Mammary epithelial cell (primary cell): ENCODE measurements at regions of chr3 and their contacts with region 1.

Region 1: GRCh38 chr3:12622335-12622734 is 41.6 kb downstream of the RAF1 start:
- DNase-seq: no peak
- H3K4me3 ChIP-seq: no peak overlapping the region
- H3K27ac ChIP-seq: no peak overlapping the region
- H3K4me1 ChIP-seq: no peaks in the 10 kb centered on the region
- H3K27me3 ChIP-seq: no peaks in the 10 kb centered on the region
- CTCF ChIP-seq: no peak

Region 2: DNA sequence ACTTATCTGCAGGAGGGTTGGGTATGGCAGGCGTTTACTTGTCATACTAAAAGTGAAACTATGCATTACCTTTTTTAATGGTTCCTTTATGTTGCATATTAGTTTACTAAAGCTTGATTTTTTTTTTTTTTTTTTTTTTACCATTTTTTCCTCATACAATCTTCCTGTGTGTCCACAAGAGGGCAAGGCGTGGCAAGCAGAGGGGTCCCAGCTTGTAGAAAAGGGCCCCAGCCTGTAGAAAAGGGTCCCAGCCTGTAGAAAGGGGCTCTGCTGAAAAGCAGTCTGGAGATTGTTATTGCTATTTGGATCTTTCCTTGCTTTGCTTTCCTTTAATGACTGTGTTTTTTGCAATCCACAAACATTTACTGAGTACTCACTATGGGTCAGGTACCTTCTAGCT is 43.6 kb before region 1 on chr3:
- CTCF ChIA-PET with region 1: no interaction called
- dilution Hi-C with region 1: loop called (anchors 5 kb)
- in situ Hi-C with region 1: no loop called
- intact Hi-C with region 1: no loop called
- DNase-seq: no peak
- H3K4me3 ChIP-seq: no peak overlapping the region
- H3K27ac ChIP-seq: no peak overlapping the region
- H3K4me1 ChIP-seq: no peaks in the 10 kb centered on the region
- H3K27me3 ChIP-seq: no peaks in the 10 kb centered on the region
- CTCF ChIP-seq: peak in 1 of 2 donors; percentile 21